ENCODE measurements at regions of chr3 and their contacts with region 1.

Region 1: DNA sequence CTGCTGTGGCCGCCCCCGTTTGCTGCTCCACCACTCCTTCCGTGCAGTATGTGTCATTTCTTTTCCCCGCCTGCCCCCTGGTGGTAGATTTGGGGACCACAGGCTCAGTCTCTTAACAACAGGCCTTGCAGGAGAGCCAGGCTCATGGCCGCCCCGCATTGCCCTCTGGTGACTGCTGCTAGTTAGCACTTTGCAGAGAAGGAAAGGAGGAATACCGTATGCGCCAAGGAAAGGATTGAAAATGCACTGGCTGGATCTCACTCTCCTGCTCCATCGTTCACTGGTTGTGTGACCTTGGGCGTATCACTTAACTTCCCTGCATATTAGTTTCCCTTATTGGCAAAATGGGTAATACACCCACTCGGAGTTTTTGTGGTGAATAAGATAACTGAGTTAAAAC is 39.3 kb upstream of the PXYLP1 start:
- DNase-seq: peak; percentile 100
- H3K4me3 Mint-ChIP-seq: no peak overlapping the region
- H3K27ac Mint-ChIP-seq: no peak overlapping the region
- H3K4me1 Mint-ChIP-seq: peaks cover 9% of the 10 kb centered on the region
- H3K27me3 Mint-ChIP-seq: no peaks in the 10 kb centered on the region

Region 2: GRCh38 chr3:140898340-140899180 is 293.8 kb before region 1 on chr3:
- CTCF ChIA-PET with region 1: interaction called, 25 read pairs
- intact Hi-C with region 1: loop called (anchors 1 kb)
- DNase-seq: peak; percentile 26
- H3K4me3 Mint-ChIP-seq: no peak overlapping the region
- H3K27ac Mint-ChIP-seq: no peak overlapping the region
- H3K4me1 Mint-ChIP-seq: no peaks in the 10 kb centered on the region
- H3K27me3 Mint-ChIP-seq: peaks cover 11% of the 10 kb centered on the region

Region 3: GRCh38 chr3:140941434-140942220 is 250.7 kb before region 1 on chr3 and contains the start of gene SLC25A36:
- CTCF ChIA-PET with region 1: interaction called, 3 read pairs
- intact Hi-C with region 1: loop called (anchors 1 kb)
- DNase-seq: peak; percentile 99
- H3K4me3 Mint-ChIP-seq: peak within 1 kb of the TSS; percentile 89
- H3K27ac Mint-ChIP-seq: peak within 1 kb of the TSS; percentile 88
- H3K4me1 Mint-ChIP-seq: peaks cover 35% of the 10 kb centered on the region
- H3K27me3 Mint-ChIP-seq: no peaks in the 10 kb centered on the region
- total RNA-seq, gene SLC25A36: 48.7 to 50.1 TPM

Region 4: GRCh38 chr3:141000027-141000663 is 192.2 kb before region 1 on chr3:
- CTCF ChIA-PET with region 1: interaction called, 24 read pairs
- intact Hi-C with region 1: loop called (anchors 1 kb)
- DNase-seq: peak; percentile 73
- H3K4me3 Mint-ChIP-seq: no peak overlapping the region
- H3K27ac Mint-ChIP-seq: no peak overlapping the region
- H3K4me1 Mint-ChIP-seq: peaks cover 4% of the 10 kb centered on the region
- H3K27me3 Mint-ChIP-seq: no peaks in the 10 kb centered on the region

Region 5: DNA sequence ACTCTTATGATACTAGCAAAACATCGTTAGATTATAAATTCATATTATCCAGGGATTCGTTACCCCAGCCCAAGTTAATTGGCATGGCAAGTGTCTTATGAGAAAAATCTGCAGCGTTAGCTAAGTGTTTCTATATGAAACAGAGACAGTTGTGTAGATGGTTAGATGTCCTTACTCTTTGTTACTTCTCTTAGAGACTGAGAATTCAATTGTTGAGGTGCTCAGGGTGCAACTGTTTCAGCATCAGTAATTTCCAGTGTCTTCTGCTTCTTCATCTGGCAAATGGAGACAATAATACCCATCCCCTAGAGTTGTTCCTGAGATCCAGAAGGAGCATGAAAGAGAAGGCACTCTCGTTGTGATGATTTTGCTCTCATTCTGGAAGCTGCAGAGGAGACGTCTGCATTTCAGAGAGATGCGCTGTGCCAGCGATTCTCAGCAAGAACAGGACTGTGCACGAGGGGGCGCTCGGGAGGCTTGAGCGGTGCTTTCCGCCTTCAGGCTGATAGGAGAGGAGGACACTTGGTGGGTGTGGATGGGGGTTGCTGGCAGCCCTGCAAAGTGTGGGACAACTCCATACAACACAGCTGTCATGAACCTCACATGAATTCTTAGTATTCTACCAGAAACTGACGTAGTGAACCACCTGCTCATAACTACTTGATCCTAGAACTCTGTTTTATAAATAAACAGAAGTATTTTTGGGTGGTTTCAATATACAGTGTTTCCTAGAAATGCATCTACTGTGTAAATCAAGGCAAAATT is 180.9 kb before region 1 on chr3:
- CTCF ChIA-PET with region 1: interaction called, 14 read pairs
- intact Hi-C with region 1: loop called (anchors 1 kb)
- DNase-seq: peak; percentile 91
- H3K4me3 Mint-ChIP-seq: no peak overlapping the region
- H3K27ac Mint-ChIP-seq: no peak overlapping the region
- H3K4me1 Mint-ChIP-seq: peaks cover 5% of the 10 kb centered on the region
- H3K27me3 Mint-ChIP-seq: peaks cover 12% of the 10 kb centered on the region

Region 6: DNA sequence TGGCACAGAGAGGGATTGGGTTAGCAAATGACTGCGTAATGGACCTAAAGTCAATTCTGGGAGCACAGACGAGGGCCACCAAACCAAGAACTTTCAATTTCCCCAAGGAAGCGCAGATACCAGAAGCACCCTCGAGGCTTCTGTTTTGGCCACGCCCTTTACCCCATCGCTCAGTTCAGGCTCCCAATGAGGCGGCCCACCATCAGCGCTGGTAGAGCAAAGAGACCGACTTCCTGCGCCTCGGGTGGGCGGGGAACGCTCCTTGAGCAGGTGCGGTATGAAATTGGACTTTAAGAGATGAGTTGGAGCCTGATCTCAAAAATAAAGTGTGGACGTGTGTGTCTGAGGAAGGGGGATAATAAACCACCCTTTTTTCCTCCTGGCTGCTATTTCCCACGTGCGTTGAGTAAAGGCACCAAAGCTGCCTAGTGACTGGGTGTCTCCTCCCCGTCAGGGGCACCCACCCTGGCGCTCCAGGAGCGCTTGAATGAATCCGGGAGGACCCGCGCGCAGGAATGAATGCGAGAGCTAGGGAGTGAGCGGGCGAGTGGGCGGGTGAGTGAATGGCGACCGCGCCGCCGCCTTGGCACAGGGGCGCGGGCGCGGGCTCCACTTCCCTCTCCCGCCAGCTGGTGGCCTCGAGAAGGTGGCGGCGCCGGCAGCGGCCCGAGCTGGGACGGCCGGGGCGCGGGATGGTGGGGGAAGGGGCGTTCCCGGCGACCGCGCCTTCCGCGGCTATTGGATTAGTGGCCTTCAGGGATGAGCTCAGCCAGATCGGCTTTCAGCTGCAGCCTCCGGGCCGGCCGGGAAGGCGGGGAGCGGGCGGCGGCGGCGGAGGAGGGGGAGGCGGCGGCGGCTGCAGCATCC is 141.5 kb before region 1 on chr3 and contains the start of gene SPSB4:
- CTCF ChIA-PET with region 1: interaction called, 6 read pairs
- intact Hi-C with region 1: loop called (anchors 2 kb)
- DNase-seq: peak; percentile 28
- H3K4me3 Mint-ChIP-seq: peak within 1 kb of the TSS; percentile 58
- H3K27ac Mint-ChIP-seq: no peak within 1 kb of the TSS
- H3K4me1 Mint-ChIP-seq: peaks cover 8% of the 10 kb centered on the region
- H3K27me3 Mint-ChIP-seq: peaks cover 39% of the 10 kb centered on the region
- total RNA-seq, gene SPSB4: not detected

Region 7: GRCh38 chr3:141094790-141095545 is 97.4 kb before region 1 on chr3:
- CTCF ChIA-PET with region 1: no interaction called
- intact Hi-C with region 1: no loop called
- DNase-seq: no peak
- H3K4me3 Mint-ChIP-seq: no peak overlapping the region
- H3K27ac Mint-ChIP-seq: no peak overlapping the region
- H3K4me1 Mint-ChIP-seq: no peaks in the 10 kb centered on the region
- H3K27me3 Mint-ChIP-seq: no peaks in the 10 kb centered on the region

Region 8: GRCh38 chr3:141105828-141106628 is 86.3 kb before region 1 on chr3:
- CTCF ChIA-PET with region 1: interaction called, 3 read pairs
- intact Hi-C with region 1: loop called (anchors 1 kb)
- DNase-seq: peak; percentile 84
- H3K4me3 Mint-ChIP-seq: no peak overlapping the region
- H3K27ac Mint-ChIP-seq: no peak overlapping the region
- H3K4me1 Mint-ChIP-seq: no peaks in the 10 kb centered on the region
- H3K27me3 Mint-ChIP-seq: no peaks in the 10 kb centered on the region

Region 9: DNA sequence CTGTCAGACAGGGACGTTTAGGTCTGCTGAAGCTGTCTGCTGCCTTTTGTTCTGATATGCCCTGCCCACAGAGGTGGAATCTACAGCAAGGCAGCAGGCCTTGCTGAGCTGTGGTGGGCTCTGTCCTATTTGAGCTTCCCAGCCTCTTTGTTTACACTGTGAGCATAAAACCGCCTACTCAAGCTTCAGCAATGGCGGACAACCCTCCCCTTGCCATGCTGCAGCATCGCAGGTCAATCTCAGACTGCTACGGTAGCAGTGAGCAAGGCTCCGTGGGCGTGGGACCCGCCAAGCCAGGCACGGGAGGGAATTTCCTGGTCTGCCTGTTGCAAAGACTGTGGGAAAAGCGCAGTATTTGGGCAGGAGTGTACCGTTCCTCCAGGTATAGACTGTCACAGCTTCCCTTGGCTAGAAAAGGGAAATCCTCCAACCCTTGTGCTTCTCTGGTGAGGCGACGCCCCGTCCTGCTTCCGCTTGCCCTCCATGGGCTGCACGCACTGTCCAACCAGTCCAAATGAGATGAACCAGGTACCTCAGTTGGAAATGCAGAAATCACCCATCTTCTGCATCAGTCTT is 69.8 kb before region 1 on chr3:
- CTCF ChIA-PET with region 1: no interaction called
- intact Hi-C with region 1: no loop called
- DNase-seq: no peak
- H3K4me3 Mint-ChIP-seq: no peak overlapping the region
- H3K27ac Mint-ChIP-seq: no peak overlapping the region
- H3K4me1 Mint-ChIP-seq: no peaks in the 10 kb centered on the region
- H3K27me3 Mint-ChIP-seq: peaks cover 5% of the 10 kb centered on the region

Region 10: DNA sequence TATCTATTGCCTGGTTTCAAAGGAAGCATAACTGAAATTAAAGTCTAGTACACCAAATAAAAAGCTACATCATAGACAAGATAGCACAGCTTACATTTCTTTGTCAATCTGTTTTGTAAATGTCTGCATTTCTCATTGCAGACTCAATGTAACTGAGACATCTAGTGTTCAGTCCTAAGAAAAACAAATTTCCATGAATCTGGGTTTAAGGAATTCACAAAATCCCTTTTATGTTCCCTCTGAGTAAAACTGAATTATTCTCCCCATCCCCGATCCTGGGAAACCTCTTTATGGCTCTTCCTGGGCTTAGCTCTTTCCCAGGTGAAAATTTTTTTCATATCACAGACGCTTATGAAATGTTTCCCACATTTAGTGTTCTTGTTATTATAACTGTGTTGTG is 272.9 kb after region 1 on chr3:
- CTCF ChIA-PET with region 1: no interaction called
- intact Hi-C with region 1: no loop called
- DNase-seq: no peak
- H3K4me3 Mint-ChIP-seq: no peak overlapping the region
- H3K27ac Mint-ChIP-seq: no peak overlapping the region
- H3K4me1 Mint-ChIP-seq: peaks cover 3% of the 10 kb centered on the region
- H3K27me3 Mint-ChIP-seq: no peaks in the 10 kb centered on the region

Region 11: GRCh38 chr3:142129516-142130171 is 937.3 kb after region 1 on chr3:
- CTCF ChIA-PET with region 1: no interaction called
- intact Hi-C with region 1: no loop called
- DNase-seq: no peak
- H3K4me3 Mint-ChIP-seq: no peak overlapping the region
- H3K27ac Mint-ChIP-seq: no peak overlapping the region
- H3K4me1 Mint-ChIP-seq: peaks cover 2% of the 10 kb centered on the region
- H3K27me3 Mint-ChIP-seq: no peaks in the 10 kb centered on the region